WTC11 (cell line): ENCODE measurements at regions of chr18 and their contacts with region 1.

Region 1: DNA sequence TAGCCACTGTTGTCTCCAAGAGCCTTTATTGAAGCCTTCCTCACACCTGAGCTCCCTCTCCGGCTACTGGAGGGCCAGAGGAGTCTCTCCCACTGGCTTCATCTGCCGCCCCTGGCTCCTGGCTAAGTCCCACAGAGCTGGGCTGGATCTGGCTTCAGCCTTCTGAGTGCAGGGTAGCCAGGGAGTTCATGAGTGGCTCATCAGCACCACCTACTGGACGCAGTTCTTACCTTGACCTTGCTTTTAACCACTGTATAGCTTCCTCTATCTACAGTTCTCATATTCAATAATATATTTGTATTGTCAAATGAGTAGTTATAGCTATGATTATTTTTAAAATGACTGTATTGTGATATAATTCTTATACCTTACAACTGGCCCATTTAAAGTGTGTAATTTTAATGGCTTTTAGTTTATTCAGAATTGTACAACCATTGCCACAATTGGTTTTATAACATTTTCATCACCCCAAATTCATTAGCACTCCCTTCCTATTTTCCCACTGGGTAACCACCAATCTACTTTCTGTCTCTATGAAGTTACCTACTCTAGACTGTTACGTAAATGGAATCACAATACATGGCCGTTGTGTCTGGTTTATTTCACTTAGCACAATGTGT is 17.7 kb downstream of the CNDP1 start:
- DNase-seq: peak; percentile 87
- ATAC-seq: peak; percentile 100
- H3K4me3 Mint-ChIP-seq: no peak overlapping the region
- H3K27ac Mint-ChIP-seq: no peak overlapping the region
- H3K4me1 Mint-ChIP-seq: no peaks in the 10 kb centered on the region; the same call in 1 of the 2 replicates
- H3K27me3 Mint-ChIP-seq: peaks cover 11% of the 10 kb centered on the region
- CTCF ChIP-seq: peak; percentile 77

Region 2: DNA sequence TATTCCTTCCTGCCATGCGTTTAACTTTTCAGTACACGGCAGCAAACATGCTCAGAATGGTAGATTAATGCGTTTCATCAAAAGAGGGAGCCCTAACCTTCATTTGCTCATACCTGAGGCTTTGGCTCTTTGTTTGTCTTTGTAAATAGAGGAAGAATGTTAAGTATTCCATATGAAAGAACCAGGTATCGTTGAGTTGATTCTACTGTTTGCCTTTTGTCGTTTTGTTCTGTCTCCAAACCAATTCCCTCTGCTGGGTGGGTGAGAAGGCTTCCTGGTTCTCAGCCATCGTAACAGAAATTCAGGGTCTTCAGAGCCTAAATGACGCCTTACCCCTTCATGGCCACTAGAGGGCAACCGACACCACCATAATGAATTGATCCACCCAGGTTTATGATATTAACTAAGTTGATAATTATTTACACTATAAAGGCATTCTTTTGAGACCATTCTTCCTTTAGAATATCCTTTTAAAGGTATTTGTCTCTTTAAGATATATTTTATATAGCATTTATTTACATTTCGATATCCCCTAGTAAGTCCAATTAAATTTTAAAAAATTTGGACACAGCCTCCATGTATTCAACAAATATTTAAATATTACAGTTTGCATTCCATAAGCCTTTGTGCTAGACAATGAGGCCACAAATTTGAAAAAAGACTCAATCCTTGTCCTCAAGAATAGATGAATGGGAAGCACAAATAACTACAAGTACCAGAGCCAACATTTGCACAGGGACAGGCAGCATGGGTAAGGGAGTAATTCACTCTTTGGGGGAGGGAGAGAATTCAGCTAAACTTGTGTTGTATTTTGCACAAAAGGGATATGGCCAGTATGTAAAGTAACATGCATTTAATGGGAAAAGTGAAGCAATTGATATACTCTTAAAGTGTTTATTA is 355.6 kb before region 1 on chr18:
- CTCF ChIA-PET with region 1: interaction called, 13 read pairs
- POLR2A ChIA-PET with region 1: no interaction called
- DNase-seq: no peak
- ATAC-seq: peak; percentile 80
- H3K4me3 Mint-ChIP-seq: peak overlapping the region; percentile 54
- H3K27ac Mint-ChIP-seq: peak overlapping the region; percentile 88
- H3K4me1 Mint-ChIP-seq: peaks cover 19% of the 10 kb centered on the region
- H3K27me3 Mint-ChIP-seq: no peaks in the 10 kb centered on the region
- CTCF ChIP-seq: peak; percentile 80

Region 3: DNA sequence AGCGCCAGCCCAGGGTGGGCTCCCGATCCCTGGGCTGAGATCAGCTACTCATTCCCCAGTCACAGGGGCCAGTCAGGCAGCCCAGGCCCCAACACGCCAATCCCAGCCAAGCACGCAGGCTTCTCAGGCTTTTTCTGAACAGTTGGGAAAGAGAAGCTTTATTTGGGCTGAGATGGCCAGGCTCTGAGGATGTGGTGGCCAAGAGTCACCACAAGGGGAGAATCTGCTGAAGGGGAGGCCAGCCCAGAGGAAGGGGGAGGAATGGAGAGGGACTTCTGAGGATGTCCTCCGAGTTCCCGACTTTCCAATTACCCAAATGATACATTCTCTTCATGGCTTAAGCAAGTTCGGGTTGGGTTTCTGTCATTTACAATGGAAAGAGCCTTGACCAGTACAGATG is 92.2 kb before region 1 on chr18:
- CTCF ChIA-PET with region 1: interaction called, 12 read pairs
- POLR2A ChIA-PET with region 1: no interaction called
- DNase-seq: peak; percentile 53
- ATAC-seq: peak; percentile 83
- H3K4me3 Mint-ChIP-seq: no peak overlapping the region
- H3K27ac Mint-ChIP-seq: no peak overlapping the region
- H3K4me1 Mint-ChIP-seq: peaks cover 3% of the 10 kb centered on the region
- H3K27me3 Mint-ChIP-seq: peaks cover 45% of the 10 kb centered on the region
- CTCF ChIP-seq: 0 out of 2 replicates have a peak, but pooled peaks have one; percentile 28

Region 4: GRCh38 chr18:74529811-74530583 is 22.0 kb before region 1 on chr18:
- CTCF ChIA-PET with region 1: interaction called, 20 read pairs
- POLR2A ChIA-PET with region 1: no interaction called
- DNase-seq: no peak
- ATAC-seq: no peak
- H3K4me3 Mint-ChIP-seq: no peak overlapping the region
- H3K27ac Mint-ChIP-seq: no peak overlapping the region
- H3K4me1 Mint-ChIP-seq: 0 out of 2 replicates have a peak, but pooled peaks cover 2% of the 10 kb centered on the region
- H3K27me3 Mint-ChIP-seq: no peaks in the 10 kb centered on the region; the same call in 1 of the 2 replicates
- CTCF ChIP-seq: no peak

Region 5: DNA sequence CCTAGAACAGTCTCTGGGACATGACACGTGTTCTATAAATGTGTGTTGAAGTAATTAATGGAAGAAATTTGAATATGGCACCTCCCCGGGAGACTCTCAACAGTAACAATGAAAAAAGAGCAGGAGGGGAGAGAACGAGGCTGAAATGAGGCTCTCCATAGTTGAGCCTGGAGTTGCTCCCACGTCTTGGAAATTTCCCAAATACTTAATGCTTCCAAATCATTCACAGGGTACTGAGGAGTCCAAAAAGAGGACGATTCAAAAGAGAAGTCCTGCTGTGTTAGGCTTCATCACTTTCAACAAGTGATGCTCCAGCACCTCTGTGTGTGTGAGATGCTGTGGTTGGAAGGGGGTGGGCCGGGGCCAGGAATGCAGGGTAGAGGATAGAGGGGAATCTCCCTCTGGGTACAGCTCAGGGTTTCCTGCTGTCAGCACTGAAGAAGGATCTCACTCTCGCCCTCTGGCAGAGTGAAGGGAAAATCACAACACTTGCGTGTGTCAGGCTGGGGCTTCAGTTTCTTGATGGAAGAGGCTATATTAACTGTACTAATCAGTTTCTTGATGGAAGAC is 27.5 kb after region 1 on chr18:
- CTCF ChIA-PET with region 1: interaction called, 11 read pairs
- POLR2A ChIA-PET with region 1: no interaction called
- DNase-seq: peak; percentile 35
- ATAC-seq: peak; percentile 96
- H3K4me3 Mint-ChIP-seq: peak overlapping the region; percentile 24
- H3K27ac Mint-ChIP-seq: no peak overlapping the region
- H3K4me1 Mint-ChIP-seq: peaks cover 22% of the 10 kb centered on the region
- H3K27me3 Mint-ChIP-seq: peaks cover 4% of the 10 kb centered on the region
- CTCF ChIP-seq: no peak

Region 6: GRCh38 chr18:74652392-74652988 is 100.4 kb after region 1 on chr18:
- CTCF ChIA-PET with region 1: no interaction called
- POLR2A ChIA-PET with region 1: no interaction called
- DNase-seq: no peak
- ATAC-seq: peak; percentile 20; the same call in 1 of the 2 replicates
- H3K4me3 Mint-ChIP-seq: no peak overlapping the region
- H3K27ac Mint-ChIP-seq: no peak overlapping the region
- H3K4me1 Mint-ChIP-seq: peaks cover 21% of the 10 kb centered on the region
- H3K27me3 Mint-ChIP-seq: no peaks in the 10 kb centered on the region
- CTCF ChIP-seq: 0 out of 2 replicates have a peak, but pooled peaks have one; percentile 25